PC-3 (cell line): ENCODE measurements at regions of chr1 and their contacts with region 1.

Region 1: GRCh38 chr1:182484591-182485257 is 34.8 kb downstream of the RGSL1 start:
- DNase-seq: peak; percentile 10
- ATAC-seq: no peak; the same call in 1 of the 2 replicates
- H3K4me3 ChIP-seq: no peak overlapping the region
- H3K27ac ChIP-seq: no peak overlapping the region
- H3K4me1 ChIP-seq: no peaks in the 10 kb centered on the region
- H3K27me3 ChIP-seq: peaks cover 27% of the 10 kb centered on the region
- CTCF ChIP-seq: peak; percentile 31; the same call in 1 of the 2 replicates

Region 2: GRCh38 chr1:182185813-182186756 is 298.6 kb before region 1 on chr1:
- CTCF ChIA-PET with region 1: no interaction called
- POLR2A ChIA-PET with region 1: no interaction called
- intact Hi-C with region 1: no loop called
- DNase-seq: peak; percentile 92
- ATAC-seq: peak; percentile 87
- H3K4me3 ChIP-seq: peak overlapping the region; percentile 23; the same call in 1 of the 2 replicates
- H3K27ac ChIP-seq: peak overlapping the region; percentile 82
- H3K4me1 ChIP-seq: peaks cover 35% of the 10 kb centered on the region
- H3K27me3 ChIP-seq: no peaks in the 10 kb centered on the region
- CTCF ChIP-seq: no peak

Region 3: DNA sequence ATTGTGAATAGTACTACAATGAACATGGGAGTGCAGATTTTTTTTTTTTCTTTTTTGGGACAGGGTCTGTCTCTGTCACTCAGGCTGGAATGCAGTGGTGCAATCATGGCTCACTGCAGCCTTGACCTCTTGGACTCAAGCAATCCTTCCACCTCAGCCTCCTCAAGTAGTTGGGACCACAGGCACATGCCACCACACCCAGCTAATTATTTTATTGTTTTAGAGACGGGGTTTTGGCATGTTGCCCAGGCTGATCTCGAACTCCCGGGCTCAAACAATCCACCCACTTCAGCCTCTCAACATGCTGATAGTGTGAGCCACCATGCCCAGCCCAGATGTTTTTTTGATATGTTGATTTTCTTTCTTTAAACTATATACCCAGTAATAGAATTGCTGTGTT is 22.9 kb after region 1 on chr1:
- CTCF ChIA-PET with region 1: interaction called, 18 read pairs
- POLR2A ChIA-PET with region 1: no interaction called
- intact Hi-C with region 1: no loop called
- DNase-seq: no peak
- ATAC-seq: no peak
- H3K4me3 ChIP-seq: no peak overlapping the region
- H3K27ac ChIP-seq: no peak overlapping the region
- H3K4me1 ChIP-seq: no peaks in the 10 kb centered on the region
- H3K27me3 ChIP-seq: no peaks in the 10 kb centered on the region
- CTCF ChIP-seq: no peak